Dorsolateral prefrontal cortex (tissue), 120 donors: ENCODE measurements at regions of chr6 and their contacts with region 1.

Region 1: DNA sequence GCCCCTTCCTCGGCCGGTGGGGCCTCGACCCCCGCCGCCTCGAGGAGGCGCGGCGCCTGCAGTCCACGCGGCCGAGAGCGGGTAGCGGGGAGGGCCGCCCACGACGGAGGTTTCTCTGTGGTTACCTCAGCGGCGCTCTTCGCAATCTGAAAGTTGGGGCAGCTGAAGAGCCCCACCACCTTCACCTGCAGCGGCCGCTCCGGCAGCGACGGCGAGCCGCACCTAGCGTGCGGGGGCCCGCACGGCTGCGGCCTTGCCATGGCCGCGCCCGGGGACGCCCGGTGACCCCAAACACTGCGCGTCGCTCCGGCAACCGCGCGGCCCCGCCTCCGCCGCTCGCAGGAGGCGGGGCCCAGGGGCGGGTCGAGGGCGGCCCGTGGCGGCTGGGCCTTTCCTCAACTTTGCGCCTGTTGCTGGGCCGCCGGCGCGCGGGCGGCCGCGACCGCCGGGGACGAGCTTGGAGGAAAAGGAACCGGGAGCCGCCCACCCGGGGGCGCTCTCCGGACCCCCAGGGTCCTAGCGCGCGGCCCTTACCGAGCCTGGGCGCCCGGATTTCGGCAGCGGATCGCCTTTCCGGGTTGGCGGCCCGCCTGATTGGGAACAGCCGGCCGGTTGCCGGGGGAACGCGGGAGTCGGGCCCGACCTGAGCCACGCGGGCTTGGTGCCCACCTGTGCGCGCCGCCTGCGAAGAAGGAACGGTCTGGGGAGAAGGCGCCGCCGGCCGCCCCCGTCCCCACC is at the starts of genes PPIL6 and SMPD2:
- DNase-seq: peak; percentile 66 to 87 (median 82)
- H3K4me3 ChIP-seq: peak within 1 kb of the TSS; percentile 70 to 98 (median 88)
- H3K27ac ChIP-seq: peak within 1 kb of the TSS in 57 of 59 donors; percentile 31 to 92 (median 81)
- H3K27me3 ChIP-seq: no peaks in the 10 kb centered on the region
- CTCF ChIP-seq: peak in 49 of 56 donors; percentile 17 to 77 (median 49)
- total RNA-seq, gene PPIL6: 5.2 to 18.3 (median 10.6) TPM
- total RNA-seq, gene SMPD2: 3.5 to 16.3 (median 7.9) TPM

Region 2: DNA sequence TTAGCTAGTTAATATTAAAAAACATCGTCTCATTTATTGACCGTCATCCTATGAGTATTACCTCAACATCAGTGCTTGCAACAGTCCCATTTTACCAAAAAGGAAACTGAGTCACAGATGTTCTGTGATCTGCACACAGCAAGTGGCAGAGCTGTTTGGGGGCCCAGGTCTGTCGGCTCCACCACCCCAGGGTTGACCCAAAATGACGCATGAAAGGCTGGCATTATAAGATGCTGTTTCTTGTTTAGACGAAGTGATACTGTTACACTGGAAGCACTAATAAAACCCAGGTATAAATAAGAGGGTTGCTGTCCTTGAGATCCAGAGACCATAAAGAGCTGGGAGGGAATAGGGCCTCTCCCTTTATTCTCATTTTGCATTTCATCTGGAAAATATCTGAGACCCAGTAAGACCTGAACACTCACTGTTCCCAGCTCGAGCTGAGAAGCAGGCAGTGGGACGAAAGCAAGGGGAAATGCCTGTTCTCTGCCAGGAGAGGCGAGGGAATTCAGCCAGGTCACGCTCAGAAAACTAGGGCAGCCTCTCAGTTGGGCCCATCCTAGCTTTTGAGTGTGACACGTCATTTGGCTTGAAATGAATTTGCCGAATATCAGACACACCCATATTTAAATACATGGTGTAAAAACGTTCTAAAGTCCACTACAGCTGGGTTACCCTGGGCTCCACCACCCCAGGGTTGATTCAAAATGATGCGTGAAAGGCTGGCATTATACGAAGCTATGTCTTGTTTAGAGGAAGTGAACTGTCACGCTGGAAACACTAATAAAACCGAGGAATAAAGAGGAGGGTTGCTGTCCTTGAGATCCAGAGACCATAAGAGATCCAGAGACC is 16.4 kb after region 1 on chr6:
- intact Hi-C with region 1: loop called in 1 of 2 experiments (anchors 1 kb)
- DNase-seq: peak in 2 of 10 donors; percentile 32 to 83
- H3K4me3 ChIP-seq: peak overlapping the region in 52 of 59 donors; percentile 54 to 91 (median 84)
- H3K27ac ChIP-seq: peak overlapping the region in 54 of 59 donors; percentile 6 to 94 (median 83)
- H3K27me3 ChIP-seq: no peaks in the 10 kb centered on the region
- CTCF ChIP-seq: no peak

Region 3: DNA sequence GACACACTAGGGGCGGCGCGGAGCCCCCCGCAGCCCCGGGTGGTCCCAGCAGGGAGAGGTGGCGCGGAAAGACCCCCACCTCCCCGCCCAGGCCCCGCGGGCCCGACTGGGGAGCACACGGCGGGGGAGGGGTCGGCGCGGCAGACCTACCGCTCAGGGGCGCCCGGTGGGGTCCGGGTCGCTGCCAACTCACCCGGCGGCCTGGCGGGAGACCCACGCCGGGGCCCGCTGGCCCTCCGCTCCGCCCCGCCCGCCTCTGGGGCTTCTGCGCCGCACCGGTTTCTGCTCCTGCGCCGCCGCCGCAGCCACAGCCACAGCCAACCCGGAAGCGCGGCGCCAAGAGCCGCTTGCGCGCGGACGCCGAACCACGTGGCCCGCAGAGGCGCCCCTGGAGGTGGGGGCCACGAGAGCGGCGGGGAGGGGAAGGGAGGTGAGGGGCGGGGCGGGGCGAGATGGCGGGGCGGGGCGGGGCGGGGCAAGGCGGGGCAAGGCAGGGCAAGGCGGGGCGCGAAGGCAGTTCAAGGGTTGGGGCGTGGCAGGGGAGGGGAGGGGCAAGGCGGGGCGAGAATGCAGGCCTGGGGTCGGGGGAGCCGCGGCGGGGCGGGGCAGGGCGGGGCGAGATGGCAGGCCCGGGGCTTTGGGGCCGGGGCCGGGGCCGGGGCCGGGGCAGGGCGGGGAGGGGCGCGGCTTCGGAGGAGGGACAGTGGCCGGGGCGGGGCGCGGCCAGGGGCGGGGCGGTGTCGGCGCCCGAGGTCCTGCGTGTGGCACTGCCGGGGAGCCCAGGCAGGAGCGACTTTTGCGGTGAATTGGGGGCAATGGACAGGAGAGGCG is 42.6 kb after region 1 on chr6 and contains the start of gene ZBTB24:
- intact Hi-C with region 1: loop called in 1 of 2 experiments (anchors 2 kb)
- DNase-seq: peak; percentile 76 to 95 (median 87)
- H3K4me3 ChIP-seq: peak within 1 kb of the TSS; percentile 67 to 100 (median 96)
- H3K27ac ChIP-seq: peak within 1 kb of the TSS in 53 of 59 donors; percentile 30 to 90 (median 78)
- H3K27me3 ChIP-seq: no peaks in the 10 kb centered on the region
- CTCF ChIP-seq: peak in 9 of 56 donors; percentile 13 to 40 (median 21)
- total RNA-seq, gene ZBTB24: 5.4 to 12.6 (median 10.0) TPM